CD14-positive monocyte (primary cell): ENCODE measurements at regions of chr9 and their contacts with region 1.

Region 1: GRCh38 chr9:136885950-136886578 is at the start of gene TRAF2:
- DNase-seq: peak; percentile 98 to 99 (median 98)
- H3K4me3 ChIP-seq: peak within 1 kb of the TSS; percentile 74 to 85 (median 80)
- H3K4me3 Mint-ChIP-seq: peak within 1 kb of the TSS; percentile 86 to 91
- H3K27ac ChIP-seq: peak within 1 kb of the TSS in 1 of 2 donors; percentile 82
- H3K27ac Mint-ChIP-seq: peak within 1 kb of the TSS; percentile 24 to 82 (median 63)
- H3K4me1 ChIP-seq: peaks cover 31 to 39% of the 10 kb centered on the region in 2 donors
- H3K4me1 Mint-ChIP-seq: peaks cover 37% of the 10 kb centered on the region
- H3K27me3 ChIP-seq: no peaks in the 10 kb centered on the region
- H3K27me3 Mint-ChIP-seq: peaks cover 2% of the 10 kb centered on the region in 3 donors
- CTCF ChIP-seq: no peak
- polyA plus RNA-seq, gene TRAF2: 1.6 to 6.1 (median 2.0) TPM

Region 2: GRCh38 chr9:136614372-136614922 is 271.6 kb before region 1 on chr9:
- intact Hi-C with region 1: no loop called
- DNase-seq: no peak
- H3K4me3 ChIP-seq: no peak overlapping the region
- H3K4me3 Mint-ChIP-seq: no peak overlapping the region
- H3K27ac ChIP-seq: no peak overlapping the region
- H3K27ac Mint-ChIP-seq: no peak overlapping the region
- H3K4me1 ChIP-seq: peaks cover 35 to 43% of the 10 kb centered on the region in 2 donors
- H3K4me1 Mint-ChIP-seq: peaks cover 33% of the 10 kb centered on the region
- H3K27me3 ChIP-seq: no peaks in the 10 kb centered on the region
- H3K27me3 Mint-ChIP-seq: peaks cover 0 to 7% (median 2%) of the 10 kb centered on the region in 3 donors
- CTCF ChIP-seq: no peak

Region 3: GRCh38 chr9:136644598-136645351 is 241.3 kb before region 1 on chr9:
- intact Hi-C with region 1: no loop called
- DNase-seq: peak; percentile 91 to 97 (median 93)
- H3K4me3 ChIP-seq: peak overlapping the region in 2 of 3 experiments; percentile 40 to 62
- H3K4me3 Mint-ChIP-seq: peak overlapping the region; percentile 62 to 68
- H3K27ac ChIP-seq: peak overlapping the region; percentile 95 to 99
- H3K27ac Mint-ChIP-seq: peak overlapping the region; percentile 90 to 96 (median 94)
- H3K4me1 ChIP-seq: peaks cover 49 to 52% of the 10 kb centered on the region in 2 donors
- H3K4me1 Mint-ChIP-seq: peaks cover 41% of the 10 kb centered on the region
- H3K27me3 ChIP-seq: peaks cover 0 to 20% of the 10 kb centered on the region in 2 donors
- H3K27me3 Mint-ChIP-seq: peaks cover 22 to 56% (median 44%) of the 10 kb centered on the region in 3 donors
- CTCF ChIP-seq: peak; percentile 98

Region 4: DNA sequence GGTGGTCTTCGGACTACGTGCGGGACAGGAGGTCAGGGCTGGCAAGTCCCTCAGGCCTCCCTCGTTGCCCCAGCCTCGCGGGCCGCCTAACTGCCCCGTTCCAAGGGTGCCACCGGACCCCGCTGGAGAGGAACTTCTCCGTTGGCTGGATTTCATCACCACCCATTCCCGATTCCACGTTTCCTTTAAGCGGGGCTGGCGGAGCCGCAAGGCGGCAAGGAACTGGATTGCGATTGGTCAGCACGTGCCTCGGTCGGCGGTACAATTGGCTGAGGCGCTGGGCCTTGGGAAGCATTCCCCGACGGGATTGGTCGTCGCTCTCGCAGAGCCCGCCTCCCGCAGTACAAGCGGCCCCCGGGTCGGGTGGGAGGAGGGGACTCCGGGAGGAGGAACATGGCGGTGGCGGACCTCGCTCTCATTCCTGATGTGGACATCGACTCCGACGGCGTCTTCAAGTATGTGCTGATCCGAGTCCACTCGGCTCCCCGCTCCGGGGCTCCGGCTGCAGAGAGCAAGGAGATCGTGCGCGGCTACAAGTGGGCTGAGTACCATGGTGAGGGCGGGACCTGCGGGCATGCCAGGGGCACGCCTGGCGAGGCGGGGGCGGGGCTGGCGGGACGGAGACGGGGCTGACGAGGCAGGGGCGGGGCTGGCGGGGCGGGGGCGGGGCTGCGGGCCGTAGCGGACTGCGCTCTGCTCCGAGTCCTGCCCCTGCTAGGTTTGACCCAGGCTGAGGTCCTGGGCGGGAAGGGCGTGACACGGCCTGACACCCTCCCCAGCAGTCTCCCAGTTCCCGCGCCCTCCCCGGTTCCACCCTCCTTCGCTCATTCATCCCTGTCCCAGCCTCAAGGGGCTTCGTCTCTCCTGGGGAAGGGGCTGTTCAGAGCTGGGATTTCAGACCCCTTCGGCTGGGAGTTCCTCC is 36.8 kb before region 1 on chr9 and contains the start of gene PHPT1:
- intact Hi-C with region 1: loop called (anchors 2 to 5 kb)
- DNase-seq: peak; percentile 98
- H3K4me3 ChIP-seq: peak within 1 kb of the TSS; percentile 74 to 93 (median 76)
- H3K4me3 Mint-ChIP-seq: peak within 1 kb of the TSS; percentile 92 to 97
- H3K27ac ChIP-seq: peak within 1 kb of the TSS; percentile 31 to 73
- H3K27ac Mint-ChIP-seq: peak within 1 kb of the TSS; percentile 84 to 97 (median 96)
- H3K4me1 ChIP-seq: peaks cover 21 to 34% of the 10 kb centered on the region in 2 donors
- H3K4me1 Mint-ChIP-seq: peaks cover 20% of the 10 kb centered on the region
- H3K27me3 ChIP-seq: peaks cover 12 to 24% of the 10 kb centered on the region in 2 donors
- H3K27me3 Mint-ChIP-seq: peaks cover 24 to 33% (median 24%) of the 10 kb centered on the region in 3 donors
- CTCF ChIP-seq: no peak
- polyA plus RNA-seq, gene PHPT1: 70.0 to 163 (median 94.3) TPM

Region 5: DNA sequence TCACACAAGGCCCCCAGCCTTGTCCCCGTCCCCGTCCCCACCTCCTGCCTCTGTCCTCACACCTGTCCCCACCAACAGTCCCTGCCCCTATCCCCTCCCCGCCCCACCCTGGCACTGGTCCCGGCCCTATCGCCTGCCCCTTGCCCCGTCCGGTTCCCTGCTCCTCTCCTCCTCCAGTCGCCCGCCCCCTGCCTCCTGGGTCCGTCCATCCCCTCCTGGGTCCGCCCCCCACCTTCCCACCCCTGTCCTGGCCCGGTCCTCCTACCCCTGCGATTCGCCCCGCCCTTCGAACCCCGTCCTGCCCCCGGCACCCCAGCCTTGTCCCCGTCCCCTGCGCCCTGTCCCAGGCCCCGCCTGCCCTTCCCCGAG is 20.3 kb before region 1 on chr9:
- intact Hi-C with region 1: loop called (anchors 2 kb)
- DNase-seq: peak in 1 of 3 donors; percentile 8
- H3K4me3 ChIP-seq: peak overlapping the region; percentile 47 to 84 (median 54)
- H3K4me3 Mint-ChIP-seq: peak overlapping the region; percentile 79 to 83
- H3K27ac ChIP-seq: peak overlapping the region in 1 of 2 donors; percentile 89
- H3K27ac Mint-ChIP-seq: peak overlapping the region; percentile 30 to 92 (median 83)
- H3K4me1 ChIP-seq: peaks cover 10 to 14% of the 10 kb centered on the region in 2 donors
- H3K4me1 Mint-ChIP-seq: peaks cover 11% of the 10 kb centered on the region
- H3K27me3 ChIP-seq: no peaks in the 10 kb centered on the region
- H3K27me3 Mint-ChIP-seq: peaks cover 0 to 3% (median 0%) of the 10 kb centered on the region in 3 donors
- CTCF ChIP-seq: no peak

Region 6: GRCh38 chr9:136901516-136902258 is 15.6 kb after region 1 on chr9:
- intact Hi-C with region 1: no loop called
- DNase-seq: no peak
- H3K4me3 ChIP-seq: no peak overlapping the region
- H3K4me3 Mint-ChIP-seq: no peak overlapping the region
- H3K27ac ChIP-seq: peak overlapping the region in 1 of 2 donors; percentile 42
- H3K27ac Mint-ChIP-seq: peak overlapping the region in 3 of 7 donors; percentile 20 to 78 (median 51)
- H3K4me1 ChIP-seq: no peaks in the 10 kb centered on the region
- H3K4me1 Mint-ChIP-seq: peaks cover 2% of the 10 kb centered on the region
- H3K27me3 ChIP-seq: no peaks in the 10 kb centered on the region
- H3K27me3 Mint-ChIP-seq: no peaks in the 10 kb centered on the region
- CTCF ChIP-seq: no peak